ENCODE measurements at regions of chr1 and their contacts with region 1.

Region 1: DNA sequence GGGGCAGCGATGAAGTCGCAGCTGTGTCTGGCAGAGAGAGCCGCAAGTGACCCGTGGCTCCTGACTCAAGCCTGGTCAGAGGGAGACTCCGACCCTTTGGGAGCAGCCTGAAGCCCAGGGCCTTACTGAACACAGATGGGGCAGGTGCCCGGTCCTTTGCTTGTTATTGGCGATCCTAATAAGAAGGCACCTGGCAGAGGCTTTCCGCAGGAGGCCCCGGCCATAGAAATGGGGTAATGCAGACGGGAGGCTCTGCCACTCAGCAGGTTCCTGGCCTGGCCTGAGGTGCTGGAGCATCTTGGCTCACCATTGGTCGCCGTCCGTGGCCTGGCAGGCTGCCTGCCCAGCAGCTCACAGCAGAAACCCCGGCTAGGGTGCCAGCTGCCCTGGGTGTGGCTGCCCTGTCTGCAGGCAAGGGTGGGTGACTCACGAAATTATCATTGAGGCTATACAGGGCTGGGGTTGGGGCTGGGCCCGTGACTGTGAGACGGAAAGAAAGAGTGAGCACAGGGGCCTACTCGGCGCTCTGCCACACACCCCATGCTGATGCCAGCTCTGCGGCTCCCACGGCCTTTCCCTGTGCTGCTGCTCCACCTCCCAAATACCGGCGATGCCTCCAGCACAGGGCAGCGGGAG is 8.1 kb upstream of the PKP1 start:
- DNase-seq: peak in 1 of 2 donors; percentile 77
- H3K4me3 ChIP-seq: no peak overlapping the region
- H3K27ac ChIP-seq: peak overlapping the region in 1 of 2 donors; percentile 6
- H3K4me1 ChIP-seq: peaks cover 0 to 8% (median 3%) of the 10 kb centered on the region in 4 donors
- H3K27me3 ChIP-seq: peaks cover 0 to 16% of the 10 kb centered on the region in 2 donors
- CTCF ChIP-seq: no peak

Region 2: DNA sequence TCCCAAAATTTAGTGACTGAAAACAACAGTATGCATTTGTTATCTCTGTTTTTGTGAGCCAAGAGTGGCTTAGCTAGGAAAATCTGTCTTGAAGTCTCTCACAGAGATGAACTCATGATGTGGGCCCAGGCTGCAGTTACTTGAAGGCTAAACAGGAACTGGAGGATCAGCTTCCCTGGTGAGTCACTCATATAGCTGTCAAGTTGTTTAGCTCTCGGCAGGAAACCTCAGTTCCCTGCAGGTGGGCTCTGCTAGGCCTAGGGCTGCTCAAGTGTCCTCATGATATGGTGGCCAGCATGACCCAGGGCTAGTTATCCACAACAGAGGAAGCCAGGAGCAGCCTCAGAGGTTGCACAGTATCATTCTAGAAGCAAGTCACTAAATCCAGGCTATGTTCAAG is 575.3 kb before region 1 on chr1:
- intact Hi-C with region 1: loop called (anchors 10 kb)
- DNase-seq: no peak
- H3K4me3 ChIP-seq: no peak overlapping the region
- H3K27ac ChIP-seq: no peak overlapping the region
- H3K4me1 ChIP-seq: no peaks in the 10 kb centered on the region
- H3K27me3 ChIP-seq: no peaks in the 10 kb centered on the region
- CTCF ChIP-seq: no peak